ENCODE measurements at regions of chr14 and their contacts with region 1.

Region 1: GRCh38 chr14:89013084-89013504 is 188.6 kb downstream of the TTC8 start:
- DNase-seq: peak; percentile 11
- ATAC-seq: no peak
- H3K4me3 ChIP-seq: no peak overlapping the region
- H3K27ac ChIP-seq: no peak overlapping the region
- H3K4me1 ChIP-seq: no peaks in the 10 kb centered on the region; the same call in 1 of the 2 replicates
- H3K27me3 ChIP-seq: no peaks in the 10 kb centered on the region
- CTCF ChIP-seq: peak; percentile 51
- POLR2A ChIP-seq: no peak
- RAD21 ChIP-seq: peak; percentile 59

Region 2: DNA sequence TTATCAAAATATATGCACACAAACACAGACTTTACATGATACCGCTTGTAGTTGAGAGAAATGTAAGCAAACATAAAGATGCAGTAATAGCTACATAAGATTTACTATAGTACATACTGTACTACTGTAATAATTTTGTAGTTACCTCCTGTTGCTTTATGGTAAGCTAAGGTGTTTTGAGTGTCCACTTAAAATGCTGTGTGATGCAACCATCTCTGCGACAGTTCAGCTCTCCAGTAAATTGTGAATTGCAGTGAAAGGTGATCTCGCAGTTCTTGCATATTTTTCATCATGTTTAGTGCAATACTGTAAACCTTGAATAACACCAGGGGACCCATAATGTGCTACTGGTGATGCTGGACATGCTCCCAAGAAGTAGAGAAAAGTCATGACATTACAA is 428.6 kb before region 1 on chr14:
- CTCF ChIA-PET with region 1: no interaction called
- POLR2A ChIA-PET with region 1: no interaction called
- dilution Hi-C with region 1: no loop called
- in situ Hi-C with region 1: no loop called
- intact Hi-C with region 1: loop called (anchors 10 kb)
- DNase-seq: no peak
- ATAC-seq: no peak
- H3K4me3 ChIP-seq: no peak overlapping the region
- H3K27ac ChIP-seq: no peak overlapping the region
- H3K4me1 ChIP-seq: no peaks in the 10 kb centered on the region
- H3K27me3 ChIP-seq: no peaks in the 10 kb centered on the region
- CTCF ChIP-seq: no peak
- POLR2A ChIP-seq: no peak
- RAD21 ChIP-seq: no peak

Region 3: DNA sequence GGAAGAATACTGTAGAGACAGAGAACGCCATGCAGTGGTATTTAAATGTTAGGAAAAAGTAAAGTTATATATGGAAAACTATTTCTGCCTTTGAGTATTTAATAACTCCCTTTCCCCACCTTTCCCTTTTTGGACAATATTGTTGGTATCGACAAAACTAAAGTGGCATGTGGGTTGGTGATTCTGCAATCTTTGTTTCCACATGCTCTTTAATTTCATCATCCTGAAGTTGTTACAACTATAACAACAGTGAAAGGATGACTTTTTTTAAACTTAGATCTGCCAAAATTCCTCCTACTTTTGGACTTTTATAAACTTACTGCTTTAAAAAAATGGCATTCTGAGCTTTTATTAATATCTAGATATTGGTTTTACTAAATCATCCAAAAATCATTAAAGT is 163.4 kb before region 1 on chr14:
- CTCF ChIA-PET with region 1: no interaction called
- POLR2A ChIA-PET with region 1: no interaction called
- dilution Hi-C with region 1: no loop called
- in situ Hi-C with region 1: no loop called
- intact Hi-C with region 1: loop called (anchors 10 kb)
- DNase-seq: no peak
- ATAC-seq: no peak
- H3K4me3 ChIP-seq: no peak overlapping the region
- H3K27ac ChIP-seq: 0 out of 2 replicates have a peak overlapping the region, but pooled peaks have one; percentile 8
- H3K4me1 ChIP-seq: peaks cover 4% of the 10 kb centered on the region
- H3K27me3 ChIP-seq: no peaks in the 10 kb centered on the region
- CTCF ChIP-seq: no peak
- POLR2A ChIP-seq: no peak
- RAD21 ChIP-seq: no peak

Region 4: DNA sequence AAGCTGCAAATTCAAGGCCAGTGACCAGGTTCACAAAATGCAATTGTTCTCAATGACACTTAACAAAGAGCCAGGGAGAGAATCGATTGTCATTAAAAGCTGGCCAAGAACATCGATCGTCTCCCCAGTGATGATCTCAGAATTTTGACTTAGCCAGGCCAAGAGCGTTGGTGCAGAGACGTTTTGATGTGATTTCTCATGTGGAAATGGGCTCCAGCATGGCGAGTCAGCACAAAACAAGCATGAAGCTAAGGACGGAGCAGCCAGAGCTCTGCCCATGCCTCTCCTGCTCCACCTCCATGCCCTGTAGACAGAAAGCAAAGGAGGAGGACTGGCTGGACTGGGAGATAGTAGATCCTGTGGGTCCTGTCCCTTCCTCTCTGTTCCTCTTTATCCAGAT is 133.2 kb after region 1 on chr14:
- CTCF ChIA-PET with region 1: no interaction called
- POLR2A ChIA-PET with region 1: no interaction called
- dilution Hi-C with region 1: no loop called
- in situ Hi-C with region 1: no loop called
- intact Hi-C with region 1: no loop called
- DNase-seq: peak; percentile 32
- ATAC-seq: no peak
- H3K4me3 ChIP-seq: no peak overlapping the region
- H3K27ac ChIP-seq: no peak overlapping the region
- H3K4me1 ChIP-seq: peaks cover 1% of the 10 kb centered on the region; the same call in 1 of the 2 replicates
- H3K27me3 ChIP-seq: 0 out of 2 replicates have a peak, but pooled peaks cover 2% of the 10 kb centered on the region
- CTCF ChIP-seq: no peak
- POLR2A ChIP-seq: no peak
- RAD21 ChIP-seq: no peak